Activated naive CD4-positive, alpha-beta T cell treated with anti-CD3 and anti-CD28 coated beads for 36 hours (primary cell): ENCODE measurements at regions of chr1 and their contacts with region 1.

Region 1: DNA sequence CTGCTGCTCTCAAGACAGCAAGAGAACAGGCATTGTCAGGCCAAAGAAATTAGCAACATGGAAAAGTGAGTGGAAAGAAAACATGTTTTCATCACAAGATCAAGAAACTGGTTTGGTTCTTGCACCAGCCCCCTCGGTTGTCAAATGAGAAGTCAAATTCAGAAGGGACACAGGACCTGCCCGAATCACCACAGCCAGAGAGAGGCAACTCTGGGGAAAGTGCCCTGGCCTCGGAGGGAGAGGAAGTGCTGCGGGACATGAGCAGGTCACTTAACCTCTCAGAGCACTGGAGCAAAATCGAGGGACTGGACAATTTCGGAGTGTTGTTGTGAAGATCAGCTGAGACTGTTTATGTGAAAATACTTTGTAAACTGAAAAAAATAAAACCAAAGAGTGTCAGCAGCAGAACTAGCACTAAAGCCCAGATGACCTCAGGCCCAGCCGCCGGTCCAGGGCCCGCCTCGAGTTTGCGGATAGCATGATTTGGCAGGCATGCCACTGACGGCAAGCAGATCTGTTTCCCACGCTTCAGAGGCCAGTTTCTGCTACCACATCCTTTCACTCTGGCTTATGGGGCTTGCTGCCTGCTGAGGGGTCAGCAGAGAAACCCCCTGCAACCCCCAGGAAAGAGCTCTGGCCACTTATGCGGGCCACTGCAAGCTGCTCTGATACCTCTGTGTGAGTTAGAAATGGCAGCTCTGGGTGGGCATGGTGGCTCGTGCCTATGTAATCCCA is 32.1 kb downstream of the CD247 start:
- DNase-seq: peak; percentile 46
- H3K4me3 Mint-ChIP-seq: peak overlapping the region; percentile 48
- H3K27ac Mint-ChIP-seq: peak overlapping the region; percentile 85
- H3K4me1 Mint-ChIP-seq: peaks cover 95% of the 10 kb centered on the region
- H3K27me3 Mint-ChIP-seq: no peaks in the 10 kb centered on the region

Region 2: DNA sequence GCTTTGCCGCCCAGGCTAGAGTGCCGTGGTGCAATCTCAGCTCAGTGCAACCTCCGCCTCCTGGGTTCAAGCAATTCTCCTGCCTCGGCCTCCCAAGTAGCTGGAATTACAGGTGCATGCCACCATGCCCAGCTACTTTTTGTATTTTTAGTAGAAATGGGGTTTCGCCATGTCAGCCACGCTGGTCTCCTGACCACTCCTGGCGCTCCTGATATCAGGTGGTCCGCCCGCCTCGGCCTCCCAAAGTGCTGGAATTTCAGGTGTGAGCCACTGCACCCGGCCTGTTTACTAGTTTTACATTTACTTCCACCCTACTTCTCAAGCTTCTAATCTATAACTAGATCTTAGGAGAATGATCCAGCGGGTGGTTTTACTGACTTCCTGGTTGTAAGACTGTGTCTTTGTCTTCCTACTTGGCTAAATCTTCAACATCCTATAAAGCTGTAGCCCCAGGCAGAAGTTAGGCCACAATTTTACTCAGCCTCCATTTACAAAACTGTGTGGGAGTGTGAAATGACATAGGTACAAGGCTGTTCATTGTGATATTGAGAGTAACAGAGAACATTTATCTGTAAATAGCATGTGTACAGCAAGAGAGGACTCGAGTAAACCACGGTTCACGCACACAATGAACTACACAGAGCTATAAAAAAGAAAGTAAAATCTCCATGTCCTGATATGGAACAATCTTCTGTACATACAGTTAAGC is 275.1 kb before region 1 on chr1:
- CTCF ChIA-PET with region 1: no interaction called
- intact Hi-C with region 1: no loop called
- DNase-seq: no peak
- H3K4me3 Mint-ChIP-seq: no peak overlapping the region
- H3K27ac Mint-ChIP-seq: no peak overlapping the region
- H3K4me1 Mint-ChIP-seq: peaks cover 9% of the 10 kb centered on the region
- H3K27me3 Mint-ChIP-seq: no peaks in the 10 kb centered on the region

Region 3: GRCh38 chr1:167454894-167455785 is 31.1 kb before region 1 on chr1:
- CTCF ChIA-PET with region 1: interaction called, 8 read pairs
- intact Hi-C with region 1: loop called (anchors 1 kb)
- DNase-seq: peak; percentile 83
- H3K4me3 Mint-ChIP-seq: peak overlapping the region; percentile 79
- H3K27ac Mint-ChIP-seq: peak overlapping the region; percentile 87
- H3K4me1 Mint-ChIP-seq: peaks cover 67% of the 10 kb centered on the region
- H3K27me3 Mint-ChIP-seq: no peaks in the 10 kb centered on the region

Region 4: GRCh38 chr1:167467126-167467710 is 19.0 kb before region 1 on chr1:
- CTCF ChIA-PET with region 1: interaction called, 4 read pairs
- intact Hi-C with region 1: loop called (anchors 2 kb)
- DNase-seq: peak; percentile 42
- H3K4me3 Mint-ChIP-seq: peak overlapping the region; percentile 21
- H3K27ac Mint-ChIP-seq: peak overlapping the region; percentile 69
- H3K4me1 Mint-ChIP-seq: peaks cover 85% of the 10 kb centered on the region
- H3K27me3 Mint-ChIP-seq: no peaks in the 10 kb centered on the region

Region 5: DNA sequence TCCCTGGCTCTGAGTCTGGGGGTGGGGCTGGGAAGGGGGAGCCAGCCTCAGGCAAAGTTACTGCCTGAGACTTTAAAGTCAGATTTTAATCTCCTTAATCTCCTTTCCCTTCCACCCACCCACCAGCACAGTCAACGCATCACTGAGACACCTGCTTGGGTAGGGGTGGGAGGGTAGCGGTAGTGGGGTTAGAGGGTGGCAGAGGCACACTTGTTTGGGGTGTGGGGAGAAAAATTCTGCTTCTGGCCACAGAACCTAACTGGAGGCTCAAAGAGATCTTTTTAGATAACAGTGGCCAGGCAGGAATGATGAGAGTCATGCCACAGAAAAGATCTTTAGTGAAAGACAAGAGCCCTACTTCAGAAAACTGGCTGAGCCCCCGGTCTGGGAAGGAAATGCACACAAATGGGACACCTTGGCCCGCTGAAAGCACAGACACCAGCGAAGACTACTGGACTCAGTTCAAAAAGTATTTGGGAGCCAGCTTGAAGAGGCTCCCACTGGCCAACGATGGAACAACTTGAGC is 12.0 kb before region 1 on chr1:
- CTCF ChIA-PET with region 1: interaction called, 5 read pairs
- intact Hi-C with region 1: loop called (anchors 1 kb)
- DNase-seq: peak; percentile 48
- H3K4me3 Mint-ChIP-seq: peak overlapping the region; percentile 63
- H3K27ac Mint-ChIP-seq: peak overlapping the region; percentile 79
- H3K4me1 Mint-ChIP-seq: peaks cover 85% of the 10 kb centered on the region
- H3K27me3 Mint-ChIP-seq: no peaks in the 10 kb centered on the region

Region 6: GRCh38 chr1:167499664-167500101 is 13.4 kb after region 1 on chr1:
- CTCF ChIA-PET with region 1: interaction called, 5 read pairs
- intact Hi-C with region 1: loop called (anchors 1 kb)
- DNase-seq: peak; percentile 59
- H3K4me3 Mint-ChIP-seq: peak overlapping the region; percentile 10
- H3K27ac Mint-ChIP-seq: peak overlapping the region; percentile 87
- H3K4me1 Mint-ChIP-seq: peaks cover 97% of the 10 kb centered on the region
- H3K27me3 Mint-ChIP-seq: no peaks in the 10 kb centered on the region